Endothelial cell of umbilical vein (primary cell): ENCODE measurements at regions of chr10 and their contacts with region 1.

Region 1: DNA sequence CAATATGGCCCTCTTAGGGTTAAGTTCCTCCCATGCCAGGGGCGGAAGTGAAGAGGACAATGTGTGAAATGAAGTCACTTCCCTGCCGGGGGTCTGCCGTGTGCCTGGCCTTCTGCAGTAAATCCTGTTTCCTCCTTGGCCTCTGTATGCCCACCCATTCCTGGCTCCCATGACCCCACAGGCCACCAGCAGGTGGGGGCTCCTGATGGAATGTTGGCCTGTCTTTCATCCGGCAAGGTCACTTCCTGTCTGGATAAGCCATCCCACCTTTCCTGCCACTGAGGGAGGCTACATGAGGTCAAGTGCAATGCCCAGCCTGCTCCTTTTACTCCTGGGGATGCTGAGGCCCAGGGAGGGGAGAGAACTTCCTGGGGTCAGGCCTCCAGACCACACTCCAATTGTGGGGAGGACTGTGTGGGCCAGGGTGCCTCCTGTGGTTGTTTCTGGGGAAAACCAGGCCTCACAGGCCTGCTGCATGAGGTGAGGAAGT is 22.3 kb downstream of the PALD1 start:
- DNase-seq: peak; percentile 67
- H3K4me3 ChIP-seq: no peak overlapping the region
- H3K27ac ChIP-seq: peak overlapping the region; percentile 84
- H3K4me1 ChIP-seq: peaks cover 44% of the 10 kb centered on the region
- H3K27me3 ChIP-seq: no peaks in the 10 kb centered on the region
- CTCF ChIP-seq: no peak
- POLR2A ChIP-seq: no peak

Region 2: DNA sequence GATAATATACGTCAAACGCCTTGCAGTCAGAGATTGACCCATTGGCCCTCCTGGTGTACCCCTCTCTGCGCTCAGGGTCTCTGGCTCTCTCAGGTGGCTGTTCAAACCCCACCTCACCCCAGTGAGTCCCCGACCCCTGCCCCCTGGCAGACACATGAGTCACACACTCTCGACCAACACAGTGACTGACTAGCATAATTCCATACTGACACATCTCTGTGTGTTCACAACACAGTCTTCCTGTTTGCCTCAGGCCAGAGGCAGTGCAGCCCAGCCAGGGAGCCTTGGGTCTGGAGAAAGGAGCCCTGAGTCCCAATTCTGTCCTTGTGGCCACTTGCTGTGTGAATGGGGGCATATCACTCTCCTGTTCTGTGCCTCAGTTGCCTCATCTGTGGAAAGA is 17.8 kb after region 1 on chr10:
- CTCF ChIA-PET with region 1: no interaction called
- POLR2A ChIA-PET with region 1: no interaction called
- dilution Hi-C with region 1: no loop called
- intact Hi-C with region 1: loop called (anchors 2 kb)
- DNase-seq: peak; percentile 54
- H3K4me3 ChIP-seq: no peak overlapping the region
- H3K27ac ChIP-seq: peak overlapping the region; percentile 46
- H3K4me1 ChIP-seq: peaks cover 8% of the 10 kb centered on the region
- H3K27me3 ChIP-seq: no peaks in the 10 kb centered on the region
- CTCF ChIP-seq: no peak
- POLR2A ChIP-seq: no peak